ENCODE measurements at regions of chr10 and their contacts with region 1.

Region 1: DNA sequence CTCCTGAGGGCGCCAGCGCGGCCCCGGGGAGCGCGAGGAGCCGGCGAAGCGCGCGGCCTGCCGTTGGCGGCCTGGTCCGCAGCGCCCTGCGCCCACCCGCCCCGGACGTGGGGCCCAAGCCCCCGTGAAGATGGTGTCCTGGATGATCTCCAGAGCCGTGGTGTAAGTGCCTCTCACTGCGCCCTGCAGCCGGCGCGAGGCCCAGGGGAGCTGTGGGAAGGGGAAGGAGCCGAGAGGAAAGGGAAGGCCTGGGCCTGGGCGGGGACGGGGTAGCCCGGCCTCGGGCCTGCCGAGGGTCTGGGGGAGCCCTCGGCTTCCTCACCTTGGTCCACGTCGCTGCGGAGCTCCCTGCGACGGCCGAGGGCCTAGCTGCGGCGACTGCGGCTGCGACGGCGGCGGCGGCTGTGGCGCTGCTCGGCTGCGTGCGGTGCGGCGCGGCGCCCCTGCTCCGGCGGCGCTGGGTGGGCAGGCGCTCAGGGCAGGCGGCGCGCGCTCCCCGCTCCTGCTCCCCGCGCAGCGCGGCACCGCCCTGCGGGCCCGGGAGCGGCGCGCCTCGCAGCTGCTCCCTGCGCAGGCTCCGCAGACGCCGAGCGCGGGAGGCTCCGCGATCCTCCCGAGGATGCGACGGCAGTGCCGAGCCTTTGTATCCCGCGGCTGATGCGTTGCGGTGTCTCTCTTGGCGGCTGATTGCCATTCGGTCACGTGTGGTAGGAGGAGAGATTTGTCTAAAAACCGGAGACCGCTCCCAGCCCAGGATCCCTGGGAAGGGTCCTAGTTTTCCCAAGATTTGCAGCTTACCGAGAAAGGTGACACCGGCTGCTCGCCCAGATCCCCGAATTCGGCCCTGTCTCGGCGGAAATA is 445 bp downstream of the REEP3 start:
- DNase-seq: peak; percentile 91
- ATAC-seq: peak; percentile 62
- H3K4me3 ChIP-seq: peak overlapping the region; percentile 46 to 89 (median 82)
- H3K4me3 Mint-ChIP-seq: peak overlapping the region; percentile 91
- H3K27ac ChIP-seq: peak overlapping the region; percentile 75 to 79
- H3K27ac Mint-ChIP-seq: peak overlapping the region; percentile 89
- H3K4me1 ChIP-seq: peaks cover 6 to 17% of the 10 kb centered on the region in 2 donors
- H3K4me1 Mint-ChIP-seq: peaks cover 39% of the 10 kb centered on the region
- H3K27me3 ChIP-seq: no peaks in the 10 kb centered on the region
- H3K27me3 Mint-ChIP-seq: no peaks in the 10 kb centered on the region
- CTCF ChIP-seq: no peak

Region 2: GRCh38 chr10:63409465-63410027 is 112.1 kb before region 1 on chr10:
- CTCF ChIA-PET with region 1: no interaction called
- POLR2A ChIA-PET with region 1: interaction called, 10 read pairs
- intact Hi-C with region 1: no loop called
- DNase-seq: no peak
- ATAC-seq: no peak
- H3K4me3 ChIP-seq: no peak overlapping the region
- H3K4me3 Mint-ChIP-seq: no peak overlapping the region
- H3K27ac ChIP-seq: no peak overlapping the region
- H3K27ac Mint-ChIP-seq: no peak overlapping the region
- H3K4me1 ChIP-seq: peaks cover 6 to 10% of the 10 kb centered on the region in 2 donors
- H3K4me1 Mint-ChIP-seq: peaks cover 18% of the 10 kb centered on the region
- H3K27me3 ChIP-seq: no peaks in the 10 kb centered on the region
- H3K27me3 Mint-ChIP-seq: no peaks in the 10 kb centered on the region
- CTCF ChIP-seq: no peak

Region 3: GRCh38 chr10:63465293-63466143 is 56.1 kb before region 1 on chr10 and contains the start of gene JMJD1C:
- CTCF ChIA-PET with region 1: interaction called, 4 read pairs
- POLR2A ChIA-PET with region 1: interaction called, 3 read pairs
- intact Hi-C with region 1: loop called (anchors 1 kb)
- DNase-seq: peak; percentile 84
- ATAC-seq: peak; percentile 72
- H3K4me3 ChIP-seq: peak within 1 kb of the TSS; percentile 66 to 97 (median 92)
- H3K4me3 Mint-ChIP-seq: peak within 1 kb of the TSS; percentile 98
- H3K27ac ChIP-seq: peak within 1 kb of the TSS; percentile 60 to 75
- H3K27ac Mint-ChIP-seq: peak within 1 kb of the TSS; percentile 95
- H3K4me1 ChIP-seq: peaks cover 13% of the 10 kb centered on the region in 2 donors
- H3K4me1 Mint-ChIP-seq: peaks cover 18% of the 10 kb centered on the region
- H3K27me3 ChIP-seq: no peaks in the 10 kb centered on the region
- H3K27me3 Mint-ChIP-seq: no peaks in the 10 kb centered on the region
- CTCF ChIP-seq: no peak
- total RNA-seq, gene JMJD1C: 235 and 247 TPM in 2 replicates

Measured in B cell (primary cell).